ENCODE measurements at regions of chr19 and their contacts with region 1.

Region 1: GRCh38 chr19:47348819-47349795 is at the start of gene DHX34:
- DNase-seq: peak; percentile 97
- ATAC-seq: peak; percentile 99
- H3K4me3 ChIP-seq: peak within 1 kb of the TSS; percentile 88
- H3K27ac ChIP-seq: peak within 1 kb of the TSS; percentile 42; the same call in 1 of the 2 replicates
- H3K4me1 ChIP-seq: peaks cover 8% of the 10 kb centered on the region; the same call in 1 of the 2 replicates
- H3K27me3 ChIP-seq: no peaks in the 10 kb centered on the region
- CTCF ChIP-seq: peak; percentile 81
- total RNA-seq, gene DHX34: 28.3 and 37.5 TPM in 2 replicates

Region 2: DNA sequence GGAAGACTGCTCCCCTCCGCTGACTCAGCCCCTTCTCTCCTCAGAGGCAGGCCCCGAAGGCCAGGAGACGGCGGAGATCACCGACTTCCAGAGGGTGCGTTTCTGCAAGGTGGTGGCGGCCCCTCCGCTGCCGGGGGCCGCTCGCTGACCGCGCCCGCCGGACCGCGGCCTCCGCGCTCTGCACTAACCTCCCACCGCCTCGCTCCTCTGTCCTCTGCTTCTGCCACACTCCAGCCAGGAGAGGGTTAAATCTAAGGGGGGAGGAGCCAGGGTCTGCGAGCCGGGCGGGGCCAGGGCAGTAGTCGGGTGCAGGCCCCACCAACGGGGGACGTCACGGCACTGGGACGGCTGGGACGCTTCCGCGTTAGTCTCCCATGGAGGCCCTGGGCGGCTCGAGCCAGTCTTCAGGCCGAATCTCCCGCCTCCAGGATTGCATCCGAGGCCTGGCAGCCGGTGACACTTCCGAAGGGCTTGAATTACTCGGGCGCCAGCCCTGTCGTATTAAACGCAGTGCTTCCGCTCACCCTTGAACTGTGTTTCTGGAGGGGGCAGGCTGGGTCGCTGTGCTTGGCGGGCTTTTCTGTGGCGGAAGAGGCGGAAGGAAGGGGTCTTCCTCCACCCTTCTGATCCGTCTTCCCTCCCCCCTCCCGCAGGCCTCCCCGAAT is 75.7 kb before region 1 on chr19:
- CTCF ChIA-PET with region 1: no interaction called
- POLR2A ChIA-PET with region 1: interaction called, 12 read pairs
- intact Hi-C with region 1: no loop called
- DNase-seq: peak; percentile 79
- ATAC-seq: peak; percentile 82
- H3K4me3 ChIP-seq: peak overlapping the region; percentile 73
- H3K27ac ChIP-seq: peak overlapping the region; percentile 88
- H3K4me1 ChIP-seq: peaks cover 9% of the 10 kb centered on the region; the same call in 1 of the 2 replicates
- H3K27me3 ChIP-seq: no peaks in the 10 kb centered on the region
- CTCF ChIP-seq: no peak

Region 3: DNA sequence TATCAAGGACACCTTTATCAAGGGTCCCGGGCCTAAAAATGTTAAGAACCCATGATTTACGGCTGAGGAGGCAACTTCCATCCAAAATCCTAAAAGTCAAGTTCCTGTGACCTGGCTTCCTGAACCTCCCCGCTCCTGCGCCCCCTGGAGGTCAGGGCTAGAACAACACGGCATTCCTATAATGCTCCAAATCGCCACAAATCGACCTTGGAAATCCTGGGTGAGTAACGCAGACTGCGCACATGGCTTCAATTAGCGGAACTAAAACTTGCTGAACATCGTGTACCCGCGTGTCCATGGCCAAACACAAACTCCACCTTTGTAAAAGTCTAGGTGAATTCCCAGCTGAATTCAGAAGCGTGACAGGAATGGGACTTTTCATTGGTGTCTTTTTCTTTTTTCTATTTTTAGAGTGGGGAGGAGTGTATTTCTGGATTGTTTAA is 43.8 kb before region 1 on chr19:
- CTCF ChIA-PET with region 1: no interaction called
- POLR2A ChIA-PET with region 1: no interaction called
- intact Hi-C with region 1: loop called (anchors 5 kb)
- DNase-seq: peak; percentile 72
- ATAC-seq: peak; percentile 49
- H3K4me3 ChIP-seq: peak overlapping the region; percentile 54; the same call in 1 of the 2 replicates
- H3K27ac ChIP-seq: no peak overlapping the region
- H3K4me1 ChIP-seq: no peaks in the 10 kb centered on the region
- H3K27me3 ChIP-seq: no peaks in the 10 kb centered on the region
- CTCF ChIP-seq: peak; percentile 88

Region 4: GRCh38 chr19:47428177-47428894 is 79.2 kb after region 1 on chr19:
- CTCF ChIA-PET with region 1: interaction called, 10 read pairs
- POLR2A ChIA-PET with region 1: no interaction called
- intact Hi-C with region 1: no loop called
- DNase-seq: peak; percentile 96
- ATAC-seq: peak; percentile 94
- H3K4me3 ChIP-seq: peak overlapping the region; percentile 62
- H3K27ac ChIP-seq: peak overlapping the region; percentile 27; the same call in 1 of the 2 replicates
- H3K4me1 ChIP-seq: peaks cover 12% of the 10 kb centered on the region; the same call in 1 of the 2 replicates
- H3K27me3 ChIP-seq: peaks cover 6% of the 10 kb centered on the region
- CTCF ChIP-seq: no peak

Region 5: DNA sequence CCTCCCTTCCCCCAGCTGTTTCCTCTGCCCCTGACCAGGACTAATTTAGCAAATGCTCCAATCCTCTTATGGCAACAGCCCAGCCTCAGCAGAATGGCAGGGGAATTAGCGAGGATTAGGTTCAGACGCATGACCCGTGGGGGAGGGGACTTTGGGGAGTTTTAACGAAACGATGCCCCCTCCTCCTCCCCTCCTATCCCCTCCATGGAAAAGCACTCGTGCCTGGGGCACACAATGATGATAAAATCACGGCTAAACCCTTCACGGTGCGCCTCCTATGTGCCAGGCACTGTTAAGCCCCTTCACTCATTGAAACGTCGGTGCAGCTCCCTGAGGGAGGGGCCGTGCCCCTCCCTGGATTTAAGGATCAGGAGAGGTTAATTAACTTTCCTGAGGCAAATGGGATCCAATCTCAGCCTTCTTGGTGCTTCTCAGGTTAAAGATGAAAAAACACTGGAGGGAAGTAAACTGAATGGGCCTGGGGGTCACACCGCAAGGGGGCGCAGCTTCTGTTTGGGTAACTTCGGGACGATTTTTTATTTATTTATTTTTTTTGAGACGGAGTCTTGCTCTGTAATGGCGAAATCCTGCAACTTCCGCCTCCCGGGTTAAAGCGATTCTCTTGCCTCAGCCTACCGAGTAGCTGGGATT is 499.8 kb after region 1 on chr19:
- CTCF ChIA-PET with region 1: interaction called, 17 read pairs
- POLR2A ChIA-PET with region 1: no interaction called
- intact Hi-C with region 1: no loop called
- DNase-seq: no peak
- ATAC-seq: no peak
- H3K4me3 ChIP-seq: no peak overlapping the region
- H3K27ac ChIP-seq: no peak overlapping the region
- H3K4me1 ChIP-seq: no peaks in the 10 kb centered on the region
- H3K27me3 ChIP-seq: peaks cover 7% of the 10 kb centered on the region; the same call in 1 of the 2 replicates
- CTCF ChIP-seq: no peak

Measured in PC-3 (cell line).